Dorsolateral prefrontal cortex (tissue), 120 donors: ENCODE measurements at regions of chr4 and their contacts with region 1.

Region 1: DNA sequence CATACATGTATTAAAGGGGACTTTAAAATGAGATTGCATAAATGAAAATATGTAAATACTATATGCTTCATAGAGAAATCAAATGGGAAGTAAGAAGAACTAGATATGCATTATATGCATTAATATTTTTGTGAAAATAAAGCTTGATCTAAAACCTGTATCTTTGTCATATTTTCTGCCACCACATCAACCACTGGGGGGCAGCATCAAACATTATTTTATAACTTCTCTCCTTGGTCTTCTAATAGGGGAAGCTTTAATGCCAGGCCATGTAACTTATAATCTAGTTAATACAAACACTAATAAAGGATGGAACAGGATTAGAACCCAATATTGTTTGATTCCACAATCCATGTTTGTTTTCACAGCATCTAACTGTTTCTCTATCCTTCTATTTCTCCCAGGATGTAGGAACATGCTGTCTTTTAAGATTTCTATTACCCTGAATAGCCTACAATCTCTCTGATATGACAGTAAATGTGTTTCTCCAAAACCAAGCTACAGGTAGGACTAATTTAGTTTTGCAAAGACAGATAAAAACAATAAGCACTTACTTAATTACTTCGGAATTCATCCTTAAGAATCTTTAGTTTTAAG is 10.0 kb downstream of the QRFPR start:
- DNase-seq: peak in 1 of 10 donors; percentile 66
- H3K4me3 ChIP-seq: no peak overlapping the region
- H3K27ac ChIP-seq: no peak overlapping the region
- H3K27me3 ChIP-seq: peaks cover 0 to 15% (median 0%) of the 10 kb centered on the region in 45 donors
- CTCF ChIP-seq: peak; percentile 53 to 88 (median 72)

Region 2: DNA sequence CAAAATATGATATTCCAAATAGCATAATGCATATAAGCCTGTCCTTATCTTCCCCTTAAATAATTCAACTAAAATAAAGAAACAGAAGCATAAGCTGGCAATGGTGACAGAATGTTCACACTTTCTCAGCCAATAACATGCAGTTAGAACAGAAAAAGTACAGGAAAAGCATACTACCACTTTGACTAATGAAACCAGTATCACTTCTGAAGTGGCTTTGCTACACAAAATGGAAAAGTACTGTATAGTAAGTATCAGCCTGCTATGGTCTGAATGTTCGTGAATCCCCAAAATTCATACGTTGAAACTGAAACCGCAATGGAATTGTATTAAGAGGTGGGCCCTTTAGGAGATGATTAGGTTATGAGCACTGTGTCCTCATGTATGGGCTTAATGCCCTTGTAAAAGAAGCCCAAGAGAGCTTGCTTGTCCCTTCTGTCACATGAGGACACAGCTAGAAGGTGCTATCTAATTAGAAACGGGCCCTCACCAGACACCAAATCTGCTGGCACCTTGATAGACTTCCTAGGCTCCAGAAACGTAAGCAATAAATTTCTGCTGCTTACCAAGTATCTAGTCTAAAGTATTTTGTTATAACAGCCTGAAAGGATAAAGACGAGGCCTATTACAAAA is 550.9 kb before region 1 on chr4:
- intact Hi-C with region 1: no loop called
- DNase-seq: no peak
- H3K4me3 ChIP-seq: no peak overlapping the region
- H3K27ac ChIP-seq: no peak overlapping the region
- H3K27me3 ChIP-seq: no peaks in the 10 kb centered on the region
- CTCF ChIP-seq: no peak

Region 3: DNA sequence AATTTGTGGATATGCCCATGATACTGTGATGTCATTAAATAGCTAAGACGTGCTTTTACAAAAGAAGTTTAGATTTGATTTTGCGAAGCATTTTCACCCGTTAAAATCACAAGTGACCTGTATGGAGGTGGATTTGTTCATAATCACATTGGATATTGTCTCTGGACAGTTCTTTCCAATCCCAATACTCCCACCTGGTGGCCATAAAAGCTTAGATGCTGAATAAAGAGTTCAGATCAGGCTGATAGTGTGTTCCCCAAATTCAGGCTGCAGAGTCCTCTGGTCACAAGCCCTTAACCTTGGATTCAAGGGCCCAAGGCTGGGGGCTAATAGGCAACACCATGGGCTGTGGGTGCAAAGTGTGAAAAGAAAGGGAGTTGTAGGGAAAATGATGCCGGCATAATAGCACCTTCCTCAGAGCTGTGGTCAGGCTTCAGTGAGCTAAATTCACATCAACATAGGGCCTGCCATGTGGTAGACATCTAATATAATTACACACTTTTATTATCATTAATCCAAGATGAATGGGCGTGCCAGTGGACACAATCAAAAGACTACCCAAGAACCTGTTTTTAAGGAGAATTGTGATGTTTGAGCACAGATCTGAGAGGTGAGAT is 366.0 kb after region 1 on chr4:
- intact Hi-C with region 1: loop called (anchors 2 to 5 kb)
- DNase-seq: peak in 2 of 10 donors; percentile 11 to 40
- H3K4me3 ChIP-seq: no peak overlapping the region
- H3K27ac ChIP-seq: no peak overlapping the region
- H3K27me3 ChIP-seq: no peaks in the 10 kb centered on the region
- CTCF ChIP-seq: peak; percentile 42 to 75 (median 56)